ENCODE measurements at regions of chr21 and their contacts with region 1.

Region 1: GRCh38 chr21:36567216-36567885 is 87.4 kb upstream of the CLDN14 start:
- DNase-seq: no peak
- H3K4me3 Mint-ChIP-seq: no peak overlapping the region
- H3K27ac Mint-ChIP-seq: no peak overlapping the region
- H3K4me1 Mint-ChIP-seq: no peaks in the 10 kb centered on the region
- H3K27me3 Mint-ChIP-seq: peaks cover 2% of the 10 kb centered on the region

Region 2: GRCh38 chr21:36544545-36544944 is 22.8 kb before region 1 on chr21:
- intact Hi-C with region 1: loop called (anchors 1 kb)
- DNase-seq: no peak
- H3K4me3 Mint-ChIP-seq: no peak overlapping the region
- H3K27ac Mint-ChIP-seq: no peak overlapping the region
- H3K4me1 Mint-ChIP-seq: no peaks in the 10 kb centered on the region
- H3K27me3 Mint-ChIP-seq: peaks cover 12% of the 10 kb centered on the region

Measured in activated CD4-positive, alpha-beta T cell treated with anti-CD3 and anti-CD28 coated beads, Interleukin-2, amount 10 ng/mL, durations not matched to agents 24 days and 14 days (primary cell).